Endothelial cell of umbilical vein (primary cell): ENCODE measurements at regions of chr5 and their contacts with region 1.

Region 1: GRCh38 chr5:122896598-122897282 is 51.3 kb downstream of the SNX24 start:
- DNase-seq: peak; percentile 46
- H3K4me3 ChIP-seq: no peak overlapping the region
- H3K27ac ChIP-seq: no peak overlapping the region
- H3K4me1 ChIP-seq: no peaks in the 10 kb centered on the region
- H3K27me3 ChIP-seq: no peaks in the 10 kb centered on the region
- CTCF ChIP-seq: peak; percentile 31 to 40
- POLR2A ChIP-seq: no peak

Region 2: GRCh38 chr5:122351416-122352157 is 545.2 kb before region 1 on chr5:
- CTCF ChIA-PET with region 1: no interaction called
- POLR2A ChIA-PET with region 1: no interaction called
- dilution Hi-C with region 1: no loop called
- intact Hi-C with region 1: no loop called
- DNase-seq: no peak
- H3K4me3 ChIP-seq: no peak overlapping the region
- H3K27ac ChIP-seq: no peak overlapping the region
- H3K4me1 ChIP-seq: peaks cover 14% of the 10 kb centered on the region
- H3K27me3 ChIP-seq: no peaks in the 10 kb centered on the region
- CTCF ChIP-seq: no peak
- POLR2A ChIP-seq: no peak

Region 3: DNA sequence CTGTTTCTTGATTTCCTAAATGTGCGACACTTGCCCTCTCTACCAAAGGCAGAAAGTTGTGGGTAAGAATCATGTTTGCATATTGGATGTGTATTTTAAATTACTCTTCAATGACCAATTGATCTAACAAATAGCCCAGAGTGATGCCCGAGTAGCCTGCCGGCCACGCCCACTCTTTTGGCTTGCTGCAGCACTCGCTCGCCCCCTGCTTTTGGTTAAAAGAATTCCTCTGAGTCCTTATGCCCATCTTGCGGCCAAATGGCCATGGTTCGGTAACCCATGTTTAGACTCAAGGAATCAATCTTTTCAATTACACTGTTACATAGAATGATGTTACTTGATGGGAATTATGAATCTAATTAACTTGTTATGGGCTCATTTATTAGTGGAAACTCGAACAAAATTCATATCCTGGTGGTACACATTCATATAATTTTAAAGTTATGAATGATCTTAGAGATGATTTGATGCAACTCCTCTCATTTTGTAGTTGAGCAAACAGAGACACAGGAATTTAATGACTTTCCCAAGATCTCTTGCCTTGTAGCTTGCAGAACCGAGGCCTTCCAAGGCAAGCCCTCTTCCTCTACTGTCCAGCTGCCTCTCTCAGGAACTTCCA is 103.3 kb after region 1 on chr5:
- CTCF ChIA-PET with region 1: interaction called, 5 read pairs
- POLR2A ChIA-PET with region 1: no interaction called
- dilution Hi-C with region 1: no loop called
- intact Hi-C with region 1: loop called (anchors 1 kb)
- DNase-seq: peak; percentile 23
- H3K4me3 ChIP-seq: no peak overlapping the region
- H3K27ac ChIP-seq: no peak overlapping the region
- H3K4me1 ChIP-seq: no peaks in the 10 kb centered on the region
- H3K27me3 ChIP-seq: no peaks in the 10 kb centered on the region
- CTCF ChIP-seq: peak; percentile 17 to 31
- POLR2A ChIP-seq: no peak

Region 4: GRCh38 chr5:123089914-123090670 is 193.4 kb after region 1 on chr5:
- CTCF ChIA-PET with region 1: interaction called, 4 read pairs
- POLR2A ChIA-PET with region 1: no interaction called
- dilution Hi-C with region 1: no loop called
- intact Hi-C with region 1: loop called (anchors 10 kb)
- DNase-seq: peak; percentile 13
- H3K4me3 ChIP-seq: peak overlapping the region; percentile 18 to 32 (median 21)
- H3K27ac ChIP-seq: no peak overlapping the region
- H3K4me1 ChIP-seq: peaks cover 16% of the 10 kb centered on the region
- H3K27me3 ChIP-seq: peaks cover 82 to 99% of the 10 kb centered on the region in 2 experiments
- CTCF ChIP-seq: no peak
- POLR2A ChIP-seq: no peak

Region 5: DNA sequence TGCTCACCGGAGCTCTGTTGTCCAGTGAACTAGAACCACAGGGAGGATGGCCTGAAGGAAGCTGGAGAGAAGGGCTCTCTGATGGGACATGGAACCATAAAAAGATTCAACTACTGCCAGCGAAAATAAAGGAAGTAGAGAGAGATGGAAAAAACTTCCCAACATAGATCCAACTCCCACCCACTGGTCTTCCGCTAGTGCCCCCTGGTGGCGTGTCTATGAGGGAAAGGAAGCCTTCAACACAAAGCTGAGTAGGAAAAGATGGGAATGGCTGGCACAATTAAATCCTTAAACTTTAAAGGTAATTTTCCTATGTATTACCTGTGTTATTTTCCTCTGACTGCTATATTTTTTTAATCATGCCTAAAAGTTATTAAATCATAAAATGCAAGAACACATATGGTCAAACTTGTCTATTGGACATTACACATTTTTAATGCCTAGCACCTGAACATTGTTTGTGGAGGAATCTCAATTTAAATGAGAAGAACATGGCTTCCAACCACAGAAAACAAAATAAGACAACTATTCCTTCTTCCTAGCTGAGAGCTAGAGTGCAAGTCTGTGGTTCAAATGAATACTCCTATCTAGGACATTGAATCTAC is 474.9 kb after region 1 on chr5:
- CTCF ChIA-PET with region 1: interaction called, 21 read pairs
- POLR2A ChIA-PET with region 1: no interaction called
- dilution Hi-C with region 1: no loop called
- intact Hi-C with region 1: loop called (anchors 5 kb)
- DNase-seq: no peak
- H3K4me3 ChIP-seq: no peak overlapping the region
- H3K27ac ChIP-seq: no peak overlapping the region
- H3K4me1 ChIP-seq: no peaks in the 10 kb centered on the region
- H3K27me3 ChIP-seq: no peaks in the 10 kb centered on the region
- CTCF ChIP-seq: peak; percentile 40 to 49
- POLR2A ChIP-seq: no peak

Region 6: DNA sequence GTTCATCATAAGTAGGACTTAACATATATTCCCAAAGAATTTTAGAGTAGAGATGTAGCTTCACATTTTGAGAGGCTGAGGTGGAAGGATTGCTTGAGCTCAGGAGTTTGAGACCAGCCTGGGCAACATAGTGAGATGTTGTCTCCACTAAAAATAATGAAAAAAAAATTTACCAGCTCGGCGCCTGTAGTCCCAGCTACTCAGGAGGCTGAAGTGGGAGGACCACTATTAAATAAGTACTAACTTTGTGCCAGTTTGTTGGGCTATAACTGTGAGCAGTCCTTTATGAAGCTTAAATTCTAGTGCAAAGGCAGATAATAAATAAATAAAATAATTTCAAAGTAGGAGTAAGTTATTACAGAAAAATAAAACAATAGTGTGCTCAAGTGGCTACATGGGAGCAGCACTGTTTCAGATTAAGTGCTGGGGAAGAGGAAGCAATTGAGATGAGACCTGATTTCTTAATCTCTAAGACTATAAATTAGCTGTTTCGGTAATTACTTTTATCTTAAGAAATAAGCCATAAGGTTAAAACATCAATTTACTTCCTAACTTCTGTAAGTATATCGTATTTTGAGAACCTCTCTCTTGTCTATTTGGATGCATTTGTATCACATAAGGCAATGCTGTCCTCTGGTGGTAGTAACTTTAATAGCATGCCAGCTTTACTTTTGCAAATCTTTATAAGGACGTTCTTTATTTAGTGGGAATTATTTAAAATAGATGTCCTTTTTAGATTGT is 714.1 kb after region 1 on chr5:
- CTCF ChIA-PET with region 1: no interaction called
- POLR2A ChIA-PET with region 1: no interaction called
- dilution Hi-C with region 1: no loop called
- intact Hi-C with region 1: loop called (anchors 1 kb)
- DNase-seq: peak; percentile 84
- H3K4me3 ChIP-seq: no peak overlapping the region
- H3K27ac ChIP-seq: no peak overlapping the region
- H3K4me1 ChIP-seq: no peaks in the 10 kb centered on the region
- H3K27me3 ChIP-seq: no peaks in the 10 kb centered on the region
- CTCF ChIP-seq: peak; percentile 68 to 72
- POLR2A ChIP-seq: no peak